ENCODE measurements at regions of chr3 and their contacts with region 1.

Region 1: GRCh38 chr3:120795017-120795648 is 52.6 kb downstream of the GTF2E1 start:
- DNase-seq: peak; percentile 87
- H3K4me3 Mint-ChIP-seq: no peak overlapping the region
- H3K27ac Mint-ChIP-seq: no peak overlapping the region
- H3K4me1 Mint-ChIP-seq: peaks cover 8% of the 10 kb centered on the region
- H3K27me3 Mint-ChIP-seq: no peaks in the 10 kb centered on the region
- CTCF ChIP-seq: peak; percentile 87

Region 2: GRCh38 chr3:120147072-120147871 is 647.9 kb before region 1 on chr3:
- CTCF ChIA-PET with region 1: no interaction called
- POLR2A ChIA-PET with region 1: no interaction called
- intact Hi-C with region 1: no loop called
- DNase-seq: peak; percentile 39
- H3K4me3 Mint-ChIP-seq: no peak overlapping the region
- H3K27ac Mint-ChIP-seq: peak overlapping the region; percentile 49
- H3K4me1 Mint-ChIP-seq: peaks cover 35% of the 10 kb centered on the region
- H3K27me3 Mint-ChIP-seq: no peaks in the 10 kb centered on the region
- CTCF ChIP-seq: peak; percentile 10

Region 3: GRCh38 chr3:120239644-120240043 is 555.5 kb before region 1 on chr3:
- CTCF ChIA-PET with region 1: interaction called, 7 read pairs
- POLR2A ChIA-PET with region 1: no interaction called
- intact Hi-C with region 1: loop called (anchors 5 kb)
- DNase-seq: no peak
- H3K4me3 Mint-ChIP-seq: no peak overlapping the region
- H3K27ac Mint-ChIP-seq: no peak overlapping the region
- H3K4me1 Mint-ChIP-seq: no peaks in the 10 kb centered on the region
- H3K27me3 Mint-ChIP-seq: no peaks in the 10 kb centered on the region
- CTCF ChIP-seq: no peak

Region 4: GRCh38 chr3:120622870-120623731 is 172.0 kb before region 1 on chr3:
- CTCF ChIA-PET with region 1: interaction called, 4 read pairs
- POLR2A ChIA-PET with region 1: no interaction called
- intact Hi-C with region 1: loop called (anchors 1 kb)
- DNase-seq: peak; percentile 76
- H3K4me3 Mint-ChIP-seq: no peak overlapping the region
- H3K27ac Mint-ChIP-seq: peak overlapping the region; percentile 3
- H3K4me1 Mint-ChIP-seq: peaks cover 9% of the 10 kb centered on the region
- H3K27me3 Mint-ChIP-seq: no peaks in the 10 kb centered on the region
- CTCF ChIP-seq: peak; percentile 36

Region 5: GRCh38 chr3:120708408-120708807 is 86.7 kb before region 1 on chr3:
- CTCF ChIA-PET with region 1: no interaction called
- POLR2A ChIA-PET with region 1: no interaction called
- intact Hi-C with region 1: no loop called
- DNase-seq: no peak
- H3K4me3 Mint-ChIP-seq: no peak overlapping the region
- H3K27ac Mint-ChIP-seq: no peak overlapping the region
- H3K4me1 Mint-ChIP-seq: no peaks in the 10 kb centered on the region
- H3K27me3 Mint-ChIP-seq: no peaks in the 10 kb centered on the region
- CTCF ChIP-seq: no peak

Region 6: DNA sequence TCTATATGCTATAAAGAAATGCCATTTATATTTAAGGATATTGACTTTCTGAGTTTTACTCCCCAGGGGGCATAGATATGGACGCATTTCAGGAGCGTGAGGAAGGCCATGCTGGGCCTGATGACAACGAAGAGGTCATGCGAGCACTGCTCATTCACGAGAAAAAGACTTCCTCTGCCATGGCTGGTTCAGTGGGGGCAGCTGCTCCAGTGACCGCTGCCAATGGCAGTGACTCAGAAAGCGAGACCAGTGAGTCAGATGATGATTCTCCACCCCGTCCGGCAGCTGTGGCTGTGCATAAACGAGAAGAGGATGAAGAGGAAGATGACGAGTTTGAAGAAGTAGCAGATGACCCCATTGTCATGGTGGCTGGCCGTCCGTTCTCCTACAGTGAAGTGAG is 14.2 kb before region 1 on chr3:
- CTCF ChIA-PET with region 1: interaction called, 44 read pairs
- POLR2A ChIA-PET with region 1: no interaction called
- intact Hi-C with region 1: no loop called
- DNase-seq: peak; percentile 84
- H3K4me3 Mint-ChIP-seq: peak overlapping the region; percentile 12
- H3K27ac Mint-ChIP-seq: peak overlapping the region; percentile 49
- H3K4me1 Mint-ChIP-seq: peaks cover 12% of the 10 kb centered on the region
- H3K27me3 Mint-ChIP-seq: no peaks in the 10 kb centered on the region
- CTCF ChIP-seq: no peak

Region 7: DNA sequence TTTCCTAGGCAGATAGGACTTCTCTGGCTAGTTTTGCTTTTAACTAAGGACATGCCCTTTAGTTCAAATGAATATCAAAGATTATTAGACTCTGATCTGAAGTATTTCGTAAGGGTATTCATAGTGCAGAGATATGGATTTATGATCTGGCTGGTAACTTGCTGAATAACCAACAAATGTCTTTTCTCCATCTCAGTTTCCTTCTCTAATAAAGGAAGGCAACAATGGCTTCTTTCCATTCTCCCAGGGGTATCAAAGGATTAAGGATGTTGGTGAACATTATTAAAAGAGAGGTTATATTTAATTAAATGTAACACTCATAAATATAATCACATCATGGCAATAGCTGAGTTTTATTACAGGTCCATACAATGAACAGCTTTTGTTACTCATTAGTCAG is 33.7 kb after region 1 on chr3:
- CTCF ChIA-PET with region 1: interaction called, 12 read pairs
- POLR2A ChIA-PET with region 1: no interaction called
- intact Hi-C with region 1: no loop called
- DNase-seq: no peak
- H3K4me3 Mint-ChIP-seq: no peak overlapping the region
- H3K27ac Mint-ChIP-seq: no peak overlapping the region
- H3K4me1 Mint-ChIP-seq: no peaks in the 10 kb centered on the region
- H3K27me3 Mint-ChIP-seq: peaks cover 57% of the 10 kb centered on the region
- CTCF ChIP-seq: no peak

Region 8: GRCh38 chr3:121072133-121072532 is 277.0 kb after region 1 on chr3:
- CTCF ChIA-PET with region 1: no interaction called
- POLR2A ChIA-PET with region 1: no interaction called
- intact Hi-C with region 1: no loop called
- DNase-seq: peak; percentile 50
- H3K4me3 Mint-ChIP-seq: no peak overlapping the region
- H3K27ac Mint-ChIP-seq: no peak overlapping the region
- H3K4me1 Mint-ChIP-seq: no peaks in the 10 kb centered on the region
- H3K27me3 Mint-ChIP-seq: no peaks in the 10 kb centered on the region
- CTCF ChIP-seq: no peak